ENCODE measurements at regions of chr5 and their contacts with region 1.

Region 1: GRCh38 chr5:147857302-147858129 is 21.0 kb upstream of the SCGB3A2 start:
- DNase-seq: peak; percentile 76
- H3K4me3 ChIP-seq: no peak overlapping the region
- H3K27ac ChIP-seq: no peak overlapping the region
- H3K4me1 ChIP-seq: no peaks in the 10 kb centered on the region
- H3K27me3 ChIP-seq: no peaks in the 10 kb centered on the region
- CTCF ChIP-seq: peak; percentile 63 to 67
- POLR2A ChIP-seq: no peak

Region 2: GRCh38 chr5:147822686-147823491 is 34.6 kb before region 1 on chr5:
- CTCF ChIA-PET with region 1: interaction called, 11 read pairs
- POLR2A ChIA-PET with region 1: no interaction called
- dilution Hi-C with region 1: no loop called
- intact Hi-C with region 1: no loop called
- DNase-seq: peak; percentile 70
- H3K4me3 ChIP-seq: no peak overlapping the region
- H3K27ac ChIP-seq: no peak overlapping the region
- H3K4me1 ChIP-seq: no peaks in the 10 kb centered on the region
- H3K27me3 ChIP-seq: peaks cover 4 to 8% of the 10 kb centered on the region in 2 experiments
- CTCF ChIP-seq: peak; percentile 79 to 83
- POLR2A ChIP-seq: no peak

Region 3: GRCh38 chr5:147935032-147935431 is 77.5 kb after region 1 on chr5:
- CTCF ChIA-PET with region 1: interaction called, 170 read pairs
- POLR2A ChIA-PET with region 1: no interaction called
- dilution Hi-C with region 1: no loop called
- intact Hi-C with region 1: loop called (anchors 1 kb)
- DNase-seq: peak; percentile 77
- H3K4me3 ChIP-seq: no peak overlapping the region
- H3K27ac ChIP-seq: no peak overlapping the region
- H3K4me1 ChIP-seq: no peaks in the 10 kb centered on the region
- H3K27me3 ChIP-seq: no peaks in the 10 kb centered on the region
- CTCF ChIP-seq: peak; percentile 33 to 34
- POLR2A ChIP-seq: no peak

Region 4: GRCh38 chr5:148120317-148120716 is 262.8 kb after region 1 on chr5:
- CTCF ChIA-PET with region 1: interaction called, 5 read pairs
- POLR2A ChIA-PET with region 1: no interaction called
- dilution Hi-C with region 1: no loop called
- intact Hi-C with region 1: loop called (anchors 2 kb)
- DNase-seq: no peak
- H3K4me3 ChIP-seq: no peak overlapping the region
- H3K27ac ChIP-seq: no peak overlapping the region
- H3K4me1 ChIP-seq: no peaks in the 10 kb centered on the region
- H3K27me3 ChIP-seq: no peaks in the 10 kb centered on the region
- CTCF ChIP-seq: no peak
- POLR2A ChIP-seq: no peak

Measured in endothelial cell of umbilical vein (primary cell).